Common myeloid progenitor, CD34-positive (primary cell): ENCODE measurements at regions of chr11 and their contacts with region 1.

Region 1: GRCh38 chr11:77473801-77474683 is at the start of gene PAK1:
- DNase-seq: peak; percentile 96 to 98 (median 97)
- H3K4me3 ChIP-seq: peak within 1 kb of the TSS; percentile 15 to 85 (median 67)
- H3K27ac ChIP-seq: peak within 1 kb of the TSS in 1 of 2 experiments; percentile 21
- H3K4me1 ChIP-seq: peaks cover 10 to 27% (median 19%) of the 10 kb centered on the region in 4 experiments
- H3K27me3 ChIP-seq: peaks cover 0 to 19% (median 11%) of the 10 kb centered on the region in 5 experiments

Region 2: GRCh38 chr11:77457340-77457739 is 16.7 kb before region 1 on chr11:
- CTCF ChIA-PET with region 1: interaction called, 11 read pairs
- POLR2A ChIA-PET with region 1: interaction called, 4 read pairs
- DNase-seq: no peak
- H3K4me3 ChIP-seq: no peak overlapping the region
- H3K27ac ChIP-seq: no peak overlapping the region
- H3K4me1 ChIP-seq: peaks cover 3 to 21% (median 10%) of the 10 kb centered on the region in 4 experiments
- H3K27me3 ChIP-seq: peaks cover 0 to 10% (median 2%) of the 10 kb centered on the region in 5 experiments

Region 3: DNA sequence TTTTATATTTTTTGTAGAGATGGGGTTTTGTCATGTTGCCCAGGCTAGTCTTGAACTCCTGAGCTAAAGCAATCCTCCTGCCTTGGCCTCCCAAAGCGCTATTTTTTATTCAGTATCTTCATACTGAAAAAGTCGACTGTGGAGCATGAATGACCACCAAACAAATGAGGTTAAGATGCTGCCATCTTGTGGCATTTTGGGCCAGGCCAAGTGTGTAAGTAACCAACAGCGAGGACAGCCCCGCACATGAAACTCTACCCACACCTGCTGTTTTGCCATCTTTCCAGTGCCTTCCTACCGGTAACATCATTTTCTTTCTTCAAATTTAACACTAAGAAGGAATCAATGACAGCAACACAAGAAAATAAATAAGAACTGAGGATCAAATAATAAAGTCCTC is 83.5 kb after region 1 on chr11:
- CTCF ChIA-PET with region 1: no interaction called
- POLR2A ChIA-PET with region 1: no interaction called
- DNase-seq: peak; percentile 6 to 33 (median 32)
- H3K4me3 ChIP-seq: no peak overlapping the region
- H3K27ac ChIP-seq: no peak overlapping the region
- H3K4me1 ChIP-seq: no peaks in the 10 kb centered on the region
- H3K27me3 ChIP-seq: no peaks in the 10 kb centered on the region